Activated CD4-positive, alpha-beta memory T cell treated with anti-CD3 and anti-CD28 coated beads for 36 hours (primary cell): ENCODE measurements at regions of chr3 and their contacts with region 1.

Region 1: GRCh38 chr3:59450946-59451763 is 401.3 kb upstream of the CFAP20DC start:
- DNase-seq: peak; percentile 73
- H3K4me3 Mint-ChIP-seq: peak overlapping the region; percentile 53
- H3K27ac Mint-ChIP-seq: peak overlapping the region; percentile 94
- H3K4me1 Mint-ChIP-seq: peaks cover 64% of the 10 kb centered on the region
- H3K27me3 Mint-ChIP-seq: no peaks in the 10 kb centered on the region

Region 2: GRCh38 chr3:59266551-59266950 is 184.6 kb before region 1 on chr3:
- CTCF ChIA-PET with region 1: no interaction called
- POLR2A ChIA-PET with region 1: no interaction called
- intact Hi-C with region 1: no loop called
- DNase-seq: no peak
- H3K4me3 Mint-ChIP-seq: no peak overlapping the region
- H3K27ac Mint-ChIP-seq: no peak overlapping the region
- H3K4me1 Mint-ChIP-seq: peaks cover 4% of the 10 kb centered on the region
- H3K27me3 Mint-ChIP-seq: no peaks in the 10 kb centered on the region

Region 3: DNA sequence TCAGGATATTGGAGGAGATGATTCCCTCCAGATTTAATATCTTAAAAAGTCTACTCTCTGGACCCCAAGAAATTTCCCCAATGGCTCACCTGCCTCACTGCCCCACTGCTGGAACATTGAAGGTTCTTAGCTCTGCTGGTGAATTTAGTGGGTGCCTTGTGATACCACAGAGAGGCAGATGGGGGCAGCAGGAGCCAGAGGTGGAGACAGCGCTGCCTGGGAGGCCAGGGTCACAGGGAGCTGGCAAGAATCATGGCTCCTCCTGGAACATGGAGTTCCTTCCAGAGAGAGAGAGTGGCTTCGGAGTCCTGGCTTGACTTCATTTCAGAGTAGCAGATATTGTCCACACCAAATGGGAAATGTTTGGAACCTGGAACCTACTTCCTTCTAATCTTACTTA is 137.8 kb before region 1 on chr3:
- CTCF ChIA-PET with region 1: interaction called, 3 read pairs
- POLR2A ChIA-PET with region 1: no interaction called
- intact Hi-C with region 1: loop called (anchors 5 kb)
- DNase-seq: peak; percentile 68
- H3K4me3 Mint-ChIP-seq: no peak overlapping the region
- H3K27ac Mint-ChIP-seq: no peak overlapping the region
- H3K4me1 Mint-ChIP-seq: peaks cover 23% of the 10 kb centered on the region
- H3K27me3 Mint-ChIP-seq: no peaks in the 10 kb centered on the region

Region 4: DNA sequence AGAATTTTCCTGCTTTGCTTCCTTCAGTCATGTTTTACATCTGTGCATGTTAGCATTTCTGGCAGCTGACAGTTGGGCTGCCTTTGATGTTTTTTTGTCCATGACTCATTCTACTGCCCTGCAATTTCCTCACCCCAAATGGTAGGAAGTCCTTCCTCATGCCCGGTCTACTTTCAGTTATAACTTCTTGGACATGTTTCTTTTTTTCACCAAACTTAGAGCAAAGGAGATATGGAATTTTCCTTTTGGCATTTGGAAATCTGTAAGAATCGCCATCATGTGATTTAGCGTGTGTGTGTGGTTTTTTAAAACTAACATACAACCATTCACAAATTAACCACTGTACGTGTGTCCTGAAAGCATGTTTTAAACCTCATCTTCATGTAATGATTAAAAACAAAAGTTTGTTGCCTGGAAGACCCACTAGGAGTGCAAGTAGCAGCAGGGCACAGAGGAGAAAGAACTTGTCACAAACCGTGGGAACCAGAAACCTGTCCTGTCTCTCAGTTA is 29.4 kb after region 1 on chr3:
- CTCF ChIA-PET with region 1: no interaction called
- POLR2A ChIA-PET with region 1: no interaction called
- intact Hi-C with region 1: loop called (anchors 1 kb)
- DNase-seq: no peak
- H3K4me3 Mint-ChIP-seq: peak overlapping the region; percentile 6
- H3K27ac Mint-ChIP-seq: no peak overlapping the region
- H3K4me1 Mint-ChIP-seq: peaks cover 10% of the 10 kb centered on the region
- H3K27me3 Mint-ChIP-seq: no peaks in the 10 kb centered on the region

Region 5: DNA sequence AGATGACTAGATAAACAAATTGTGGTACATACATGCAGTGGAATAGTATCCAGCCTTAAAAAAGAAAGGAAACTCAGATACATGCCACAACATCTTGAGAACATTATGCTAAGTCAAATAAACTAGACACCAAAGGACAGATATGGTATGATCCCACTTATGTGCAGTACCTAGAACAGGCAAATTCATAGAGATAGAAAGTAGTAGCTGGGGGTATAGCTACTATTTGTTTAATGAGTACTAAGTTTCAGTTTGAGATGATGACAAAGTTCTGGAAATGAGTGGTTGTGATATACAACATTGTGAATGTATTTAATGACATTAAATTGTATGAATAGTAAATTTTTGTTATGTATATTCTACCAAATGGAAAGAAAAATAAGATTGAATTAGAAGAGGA is 75.8 kb after region 1 on chr3:
- CTCF ChIA-PET with region 1: no interaction called
- POLR2A ChIA-PET with region 1: no interaction called
- intact Hi-C with region 1: loop called (anchors 1 kb)
- DNase-seq: no peak
- H3K4me3 Mint-ChIP-seq: no peak overlapping the region
- H3K27ac Mint-ChIP-seq: peak overlapping the region; percentile 0
- H3K4me1 Mint-ChIP-seq: peaks cover 15% of the 10 kb centered on the region
- H3K27me3 Mint-ChIP-seq: peaks cover 2% of the 10 kb centered on the region

Region 6: DNA sequence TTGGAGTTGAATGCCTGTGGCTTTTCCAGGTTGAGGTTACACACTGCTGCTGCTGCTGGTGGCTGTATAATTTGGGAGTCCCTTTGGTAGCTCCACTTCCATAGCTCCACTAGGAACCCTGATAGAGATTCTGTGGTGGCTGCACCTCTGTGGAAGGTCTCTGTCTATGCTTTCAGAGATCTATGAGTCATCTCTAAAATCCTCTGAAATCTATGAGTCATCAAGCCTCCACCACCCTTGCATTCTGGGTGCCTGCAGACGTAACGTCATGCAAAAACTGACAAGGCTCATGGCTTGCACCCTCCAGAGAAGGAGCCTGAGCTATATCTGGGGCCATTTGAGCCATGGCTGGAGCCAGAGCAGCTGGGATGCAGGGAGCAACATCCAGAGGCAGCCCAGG is 635.7 kb after region 1 on chr3:
- CTCF ChIA-PET with region 1: no interaction called
- POLR2A ChIA-PET with region 1: no interaction called
- intact Hi-C with region 1: loop called (anchors 10 kb)
- DNase-seq: peak; percentile 68
- H3K4me3 Mint-ChIP-seq: no peak overlapping the region
- H3K27ac Mint-ChIP-seq: peak overlapping the region; percentile 73
- H3K4me1 Mint-ChIP-seq: peaks cover 43% of the 10 kb centered on the region
- H3K27me3 Mint-ChIP-seq: no peaks in the 10 kb centered on the region